PC-9 (cell line): ENCODE measurements at regions of chr5 and their contacts with region 1.

Region 1: GRCh38 chr5:141223112-141223783 is at the start of gene PCDHB14:
- DNase-seq: peak in 1 of 2 experiments; percentile 9
- H3K4me3 ChIP-seq: peak within 1 kb of the TSS; percentile 52
- H3K27ac ChIP-seq: no peak within 1 kb of the TSS
- H3K4me1 ChIP-seq: no peaks in the 10 kb centered on the region
- H3K27me3 ChIP-seq: no peaks in the 10 kb centered on the region
- CTCF ChIP-seq: peak; percentile 66
- total RNA-seq, gene PCDHB14: 0.07 TPM in 1 of 2 replicates, not detected in the other

Region 2: GRCh38 chr5:141534492-141535211 is 311.4 kb after region 1 on chr5:
- CTCF ChIA-PET with region 1: interaction called, 14 read pairs
- POLR2A ChIA-PET with region 1: no interaction called
- intact Hi-C with region 1: no loop called
- DNase-seq: no peak
- H3K4me3 ChIP-seq: no peak overlapping the region
- H3K27ac ChIP-seq: no peak overlapping the region
- H3K4me1 ChIP-seq: no peaks in the 10 kb centered on the region
- H3K27me3 ChIP-seq: no peaks in the 10 kb centered on the region
- CTCF ChIP-seq: no peak